ENCODE measurements at regions of chr14 and their contacts with region 1.

Region 1: GRCh38 chr14:93115069-93115820 is 480 bp downstream of the ITPK1 start:
- DNase-seq: peak; percentile 86
- ATAC-seq: peak; percentile 80
- H3K4me3 Mint-ChIP-seq: peak overlapping the region; percentile 81
- H3K27ac Mint-ChIP-seq: peak overlapping the region; percentile 77
- H3K4me1 Mint-ChIP-seq: peaks cover 47% of the 10 kb centered on the region
- H3K27me3 Mint-ChIP-seq: no peaks in the 10 kb centered on the region

Region 2: GRCh38 chr14:92951912-92952471 is 163.3 kb before region 1 on chr14:
- CTCF ChIA-PET with region 1: interaction called, 51 read pairs
- POLR2A ChIA-PET with region 1: interaction called, 3 read pairs
- DNase-seq: peak; percentile 88
- ATAC-seq: peak; percentile 95
- H3K4me3 Mint-ChIP-seq: no peak overlapping the region
- H3K27ac Mint-ChIP-seq: no peak overlapping the region
- H3K4me1 Mint-ChIP-seq: peaks cover 7% of the 10 kb centered on the region
- H3K27me3 Mint-ChIP-seq: no peaks in the 10 kb centered on the region

Region 3: GRCh38 chr14:93059917-93060545 is 55.2 kb before region 1 on chr14:
- CTCF ChIA-PET with region 1: interaction called, 53 read pairs
- POLR2A ChIA-PET with region 1: interaction called, 6 read pairs
- DNase-seq: peak; percentile 72
- ATAC-seq: peak; percentile 86
- H3K4me3 Mint-ChIP-seq: peak overlapping the region; percentile 53
- H3K27ac Mint-ChIP-seq: peak overlapping the region; percentile 86
- H3K4me1 Mint-ChIP-seq: peaks cover 66% of the 10 kb centered on the region
- H3K27me3 Mint-ChIP-seq: no peaks in the 10 kb centered on the region

Region 4: GRCh38 chr14:93096691-93097322 is 18.4 kb before region 1 on chr14:
- CTCF ChIA-PET with region 1: interaction called, 145 read pairs
- POLR2A ChIA-PET with region 1: interaction called, 4 read pairs
- DNase-seq: no peak
- ATAC-seq: no peak
- H3K4me3 Mint-ChIP-seq: no peak overlapping the region
- H3K27ac Mint-ChIP-seq: no peak overlapping the region
- H3K4me1 Mint-ChIP-seq: peaks cover 46% of the 10 kb centered on the region
- H3K27me3 Mint-ChIP-seq: no peaks in the 10 kb centered on the region

Region 5: DNA sequence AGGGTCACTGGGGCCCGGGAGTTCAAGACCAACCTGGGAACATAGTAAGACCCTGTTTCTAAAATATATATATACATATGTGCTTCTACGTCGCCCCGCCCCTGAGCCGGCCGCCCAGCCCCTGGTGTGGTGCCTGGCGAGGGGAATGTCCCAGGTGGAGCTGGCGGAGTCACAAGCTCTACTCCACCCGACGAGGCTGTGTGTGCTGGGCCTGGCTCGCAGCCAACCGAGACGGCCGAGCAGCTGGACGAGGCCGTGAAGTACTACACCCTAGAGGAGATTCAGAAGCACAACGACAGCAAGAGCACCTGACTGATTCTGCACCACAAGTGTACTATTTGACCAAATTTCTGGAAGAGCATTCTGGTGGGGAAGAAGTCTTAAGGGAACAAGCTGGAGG is 22.6 kb after region 1 on chr14:
- CTCF ChIA-PET with region 1: interaction called, 101 read pairs
- POLR2A ChIA-PET with region 1: interaction called, 6 read pairs
- DNase-seq: no peak
- ATAC-seq: no peak
- H3K4me3 Mint-ChIP-seq: no peak overlapping the region
- H3K27ac Mint-ChIP-seq: no peak overlapping the region
- H3K4me1 Mint-ChIP-seq: peaks cover 4% of the 10 kb centered on the region
- H3K27me3 Mint-ChIP-seq: no peaks in the 10 kb centered on the region

Region 6: GRCh38 chr14:93206793-93207467 is 91.7 kb after region 1 on chr14 and contains the starts of genes GON7 and UBR7:
- CTCF ChIA-PET with region 1: interaction called, 11 read pairs
- POLR2A ChIA-PET with region 1: interaction called, 4 read pairs
- DNase-seq: peak; percentile 94
- ATAC-seq: peak; percentile 89
- H3K4me3 Mint-ChIP-seq: peak within 1 kb of the TSS; percentile 100
- H3K27ac Mint-ChIP-seq: peak within 1 kb of the TSS; percentile 96
- H3K4me1 Mint-ChIP-seq: peaks cover 41% of the 10 kb centered on the region
- H3K27me3 Mint-ChIP-seq: no peaks in the 10 kb centered on the region
- total RNA-seq, gene GON7: 21.5 to 24.6 TPM
- total RNA-seq, gene UBR7: 39.0 to 49.3 TPM